ENCODE measurements at regions of chr2 and their contacts with region 1.

Region 1: GRCh38 chr2:102020596-102021181 is 28.9 kb downstream of the IL1R2 start:
- DNase-seq: peak; percentile 88 to 90
- H3K4me3 ChIP-seq: no peak overlapping the region
- H3K4me3 Mint-ChIP-seq: no peak overlapping the region
- H3K27ac Mint-ChIP-seq: peak overlapping the region; percentile 35
- H3K4me1 ChIP-seq: peaks cover 5% of the 10 kb centered on the region
- H3K4me1 Mint-ChIP-seq: peaks cover 5% of the 10 kb centered on the region
- H3K27me3 ChIP-seq: no peaks in the 10 kb centered on the region
- H3K27me3 Mint-ChIP-seq: no peaks in the 10 kb centered on the region
- CTCF ChIP-seq: peak; percentile 97 to 98

Region 2: DNA sequence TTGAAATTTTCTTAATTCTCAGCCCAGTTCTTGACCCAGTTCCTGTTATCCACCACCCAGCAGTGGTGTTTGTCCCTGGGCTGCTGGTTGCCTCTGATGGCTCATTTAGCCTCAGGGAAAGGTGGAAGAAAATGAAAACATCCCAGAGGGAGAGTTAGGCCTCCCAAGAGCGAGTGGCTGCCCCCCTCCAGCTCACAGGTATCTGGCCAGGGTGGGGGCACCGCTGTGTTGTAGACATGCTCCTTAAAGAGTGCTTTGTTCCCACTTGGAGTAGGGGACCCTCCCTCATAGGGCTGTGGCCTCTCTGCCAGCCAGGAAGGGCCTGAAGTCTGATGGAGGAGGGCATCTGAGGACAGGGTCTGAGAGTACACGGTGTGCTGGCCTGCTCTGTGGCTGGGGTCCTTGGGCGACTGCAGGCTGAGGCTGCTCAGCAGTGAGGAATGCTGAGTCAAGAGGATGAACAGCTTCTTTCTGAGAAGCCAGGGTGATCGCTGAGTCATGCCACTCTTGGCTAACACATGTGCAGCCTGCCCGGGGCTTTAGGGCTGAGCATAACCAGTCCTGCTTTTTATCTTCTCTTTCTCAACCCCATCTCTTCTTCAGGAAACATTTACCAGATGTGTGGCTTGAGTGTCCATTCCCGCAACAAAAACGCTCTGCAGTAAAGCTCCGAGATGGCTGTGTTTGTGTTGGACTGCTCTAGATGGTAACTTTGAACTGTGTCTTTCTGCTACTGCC is 43.4 kb after region 1 on chr2:
- CTCF ChIA-PET with region 1: interaction called, 4 read pairs
- POLR2A ChIA-PET with region 1: no interaction called
- intact Hi-C with region 1: loop called (anchors 5 kb)
- DNase-seq: peak; percentile 73 to 86
- H3K4me3 ChIP-seq: no peak overlapping the region
- H3K4me3 Mint-ChIP-seq: no peak overlapping the region
- H3K27ac Mint-ChIP-seq: peak overlapping the region; percentile 69
- H3K4me1 ChIP-seq: peaks cover 33% of the 10 kb centered on the region
- H3K4me1 Mint-ChIP-seq: peaks cover 36% of the 10 kb centered on the region
- H3K27me3 ChIP-seq: no peaks in the 10 kb centered on the region
- H3K27me3 Mint-ChIP-seq: no peaks in the 10 kb centered on the region
- CTCF ChIP-seq: no peak

Region 3: DNA sequence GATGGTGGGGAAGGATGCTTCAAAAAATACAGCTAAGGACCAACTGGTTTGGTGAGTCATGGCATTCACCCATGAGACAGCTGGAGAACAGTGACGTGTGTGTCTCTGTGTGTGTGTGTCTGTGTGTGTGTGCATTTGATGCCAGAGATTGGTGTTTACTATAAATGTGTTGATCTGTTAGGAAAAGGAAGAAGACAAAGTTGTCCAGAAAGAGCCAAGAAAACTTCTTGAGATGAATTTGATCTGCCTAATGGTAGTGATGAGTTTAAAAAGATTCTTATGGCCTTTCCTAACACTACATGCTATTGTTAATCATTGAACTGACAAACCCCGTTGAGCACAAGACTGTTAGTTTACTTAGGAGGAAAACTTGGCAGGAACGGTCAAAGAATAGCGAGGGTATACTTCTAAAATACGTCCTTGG is 85.5 kb after region 1 on chr2:
- CTCF ChIA-PET with region 1: interaction called, 3 read pairs
- POLR2A ChIA-PET with region 1: no interaction called
- intact Hi-C with region 1: loop called (anchors 5 kb)
- DNase-seq: no peak
- H3K4me3 ChIP-seq: no peak overlapping the region
- H3K4me3 Mint-ChIP-seq: peak overlapping the region; percentile 17
- H3K27ac Mint-ChIP-seq: peak overlapping the region; percentile 31
- H3K4me1 ChIP-seq: peaks cover 44% of the 10 kb centered on the region
- H3K4me1 Mint-ChIP-seq: peaks cover 59% of the 10 kb centered on the region
- H3K27me3 ChIP-seq: no peaks in the 10 kb centered on the region
- H3K27me3 Mint-ChIP-seq: no peaks in the 10 kb centered on the region
- CTCF ChIP-seq: no peak

Region 4: DNA sequence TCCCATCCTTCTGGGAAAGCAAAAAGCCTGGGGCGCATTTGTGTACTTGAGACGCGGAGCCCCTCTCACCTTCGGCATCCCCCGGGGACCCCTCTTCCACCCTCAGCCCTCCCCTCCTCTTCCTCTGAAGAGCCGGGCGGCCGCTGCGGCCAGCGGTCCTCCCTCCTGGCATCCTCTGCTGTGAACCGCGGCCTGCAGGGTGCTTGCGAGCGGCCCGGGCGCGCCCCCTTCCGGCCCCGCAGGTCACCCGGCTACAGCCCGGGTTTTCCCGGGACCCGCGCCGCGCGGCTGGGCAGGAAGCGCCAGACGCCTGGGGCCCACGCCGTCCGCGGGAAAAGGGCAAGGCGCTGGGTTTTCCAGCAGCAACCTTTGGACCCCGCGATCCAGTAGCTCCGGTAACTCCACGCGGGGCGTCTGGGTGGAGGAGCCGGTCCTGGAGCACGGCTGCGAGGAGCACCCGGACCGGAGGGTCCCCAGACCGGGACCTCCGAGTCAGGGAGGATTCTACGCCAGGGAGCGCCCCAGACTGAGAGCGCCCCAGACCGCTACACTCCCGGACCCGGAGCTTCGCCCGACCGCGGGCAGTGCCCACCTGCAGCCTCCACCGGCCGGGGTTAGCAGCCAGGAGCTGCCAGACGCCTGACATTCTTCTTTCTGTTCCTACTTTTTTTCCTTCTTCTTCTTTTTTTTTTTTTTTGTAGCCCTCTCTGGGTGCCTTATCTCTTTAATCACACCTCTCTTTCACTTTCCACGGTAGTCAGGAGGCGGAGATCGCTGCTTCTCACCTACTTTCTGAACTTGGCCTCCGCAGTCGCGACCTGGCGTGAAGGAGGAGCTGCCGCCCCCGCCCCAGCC is 335.1 kb after region 1 on chr2 and contains the start of gene IL18R1:
- CTCF ChIA-PET with region 1: no interaction called
- POLR2A ChIA-PET with region 1: no interaction called
- intact Hi-C with region 1: loop called (anchors 1 kb)
- DNase-seq: peak; percentile 62 to 86
- H3K4me3 ChIP-seq: peak within 1 kb of the TSS; percentile 39
- H3K4me3 Mint-ChIP-seq: peak within 1 kb of the TSS; percentile 79
- H3K27ac Mint-ChIP-seq: peak within 1 kb of the TSS; percentile 24
- H3K4me1 ChIP-seq: no peaks in the 10 kb centered on the region
- H3K4me1 Mint-ChIP-seq: peaks cover 5% of the 10 kb centered on the region
- H3K27me3 ChIP-seq: no peaks in the 10 kb centered on the region
- H3K27me3 Mint-ChIP-seq: peaks cover 16% of the 10 kb centered on the region
- CTCF ChIP-seq: peak; percentile 74 to 76
- total RNA-seq, gene IL18R1: not detected in 2 replicates

Region 5: DNA sequence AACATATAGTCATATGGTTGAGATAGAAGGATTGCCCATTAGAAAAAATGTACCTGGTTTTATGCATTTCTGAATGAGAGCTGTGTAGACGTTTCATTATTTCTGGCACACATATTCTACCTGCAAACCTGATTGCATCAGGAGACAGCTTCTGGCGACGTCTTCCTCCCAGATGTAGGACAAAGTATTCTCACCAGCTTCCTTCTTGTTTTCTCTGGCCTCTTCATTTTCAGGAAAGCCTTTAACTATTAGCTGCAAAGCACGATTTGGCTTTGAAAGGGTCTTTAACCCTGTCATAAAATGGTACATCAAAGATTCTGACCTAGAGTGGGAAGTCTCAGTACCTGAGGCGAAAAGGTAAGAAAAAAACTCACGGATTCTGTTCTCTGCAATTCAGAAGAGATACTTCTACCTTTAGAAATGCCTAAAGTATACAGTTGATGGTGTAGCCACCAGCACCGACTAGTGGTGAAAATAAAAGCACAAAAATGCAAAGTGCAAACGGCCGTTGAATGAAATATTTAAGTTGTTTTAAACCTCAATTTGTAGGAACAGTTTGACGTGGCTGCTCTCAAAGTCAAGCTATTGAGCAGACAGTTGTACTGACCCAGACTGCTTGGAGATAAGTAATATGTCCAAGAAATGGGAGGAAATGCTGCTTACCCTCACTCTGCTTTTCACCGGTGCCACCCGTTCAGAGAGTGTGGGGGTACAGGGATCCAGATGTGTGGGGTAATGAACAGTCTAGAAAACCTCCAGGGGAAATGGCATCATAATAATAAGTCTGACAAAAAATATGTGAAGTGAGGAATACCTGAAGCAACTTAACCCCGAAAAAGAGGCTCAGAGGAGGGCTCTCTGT is 422.5 kb after region 1 on chr2:
- CTCF ChIA-PET with region 1: no interaction called
- POLR2A ChIA-PET with region 1: no interaction called
- intact Hi-C with region 1: loop called (anchors 5 kb)
- DNase-seq: peak in 1 of 2 experiments; percentile 42
- H3K4me3 ChIP-seq: no peak overlapping the region
- H3K4me3 Mint-ChIP-seq: no peak overlapping the region
- H3K27ac Mint-ChIP-seq: no peak overlapping the region
- H3K4me1 ChIP-seq: no peaks in the 10 kb centered on the region
- H3K4me1 Mint-ChIP-seq: no peaks in the 10 kb centered on the region
- H3K27me3 ChIP-seq: no peaks in the 10 kb centered on the region; the same call in 1 of the 2 replicates
- H3K27me3 Mint-ChIP-seq: no peaks in the 10 kb centered on the region
- CTCF ChIP-seq: peak; percentile 66 to 69

Measured in Caco-2 (cell line).